ENCODE measurements at regions of chr14 and their contacts with region 1.

Region 1: DNA sequence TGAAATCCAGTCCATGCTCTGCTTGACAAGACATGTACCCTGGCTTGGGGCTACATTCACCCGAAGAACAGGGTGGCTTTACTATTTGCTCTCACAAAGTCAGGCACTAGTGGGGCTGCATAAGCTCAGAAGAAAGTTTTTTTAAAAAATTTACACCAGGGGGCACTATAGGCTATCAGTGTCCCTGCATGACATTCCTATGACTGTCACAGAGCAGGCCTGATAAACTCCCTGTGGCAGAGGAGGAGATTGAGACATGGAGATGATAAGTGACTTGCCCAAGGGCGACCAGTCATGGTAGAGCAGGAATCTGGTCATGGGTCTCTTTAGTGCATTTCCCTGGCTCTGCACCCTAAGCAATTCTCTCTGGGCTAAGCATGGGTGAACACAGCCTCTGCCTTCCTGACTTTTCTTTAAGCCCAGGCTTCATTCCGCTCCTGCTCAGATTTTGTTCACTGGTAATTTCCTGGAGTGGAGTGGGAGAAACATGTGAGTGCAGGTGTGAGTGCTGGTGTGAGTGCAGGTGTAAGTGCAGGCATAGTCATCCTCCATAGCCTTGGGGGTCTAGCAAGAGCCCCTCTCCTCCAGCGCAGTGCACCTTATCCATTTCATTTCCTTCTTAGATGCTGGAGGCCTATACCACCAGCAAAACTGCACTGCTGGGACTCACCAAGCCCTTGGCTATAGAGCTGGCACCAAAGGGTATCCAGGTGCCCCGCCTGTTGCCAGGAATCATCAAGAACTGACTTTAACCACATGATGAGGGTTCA is 91.6 kb downstream of the DHRS2 start:
- DNase-seq: no peak
- H3K4me3 Mint-ChIP-seq: no peak overlapping the region
- H3K27ac Mint-ChIP-seq: no peak overlapping the region
- H3K4me1 Mint-ChIP-seq: no peaks in the 10 kb centered on the region
- H3K27me3 Mint-ChIP-seq: no peaks in the 10 kb centered on the region

Region 2: DNA sequence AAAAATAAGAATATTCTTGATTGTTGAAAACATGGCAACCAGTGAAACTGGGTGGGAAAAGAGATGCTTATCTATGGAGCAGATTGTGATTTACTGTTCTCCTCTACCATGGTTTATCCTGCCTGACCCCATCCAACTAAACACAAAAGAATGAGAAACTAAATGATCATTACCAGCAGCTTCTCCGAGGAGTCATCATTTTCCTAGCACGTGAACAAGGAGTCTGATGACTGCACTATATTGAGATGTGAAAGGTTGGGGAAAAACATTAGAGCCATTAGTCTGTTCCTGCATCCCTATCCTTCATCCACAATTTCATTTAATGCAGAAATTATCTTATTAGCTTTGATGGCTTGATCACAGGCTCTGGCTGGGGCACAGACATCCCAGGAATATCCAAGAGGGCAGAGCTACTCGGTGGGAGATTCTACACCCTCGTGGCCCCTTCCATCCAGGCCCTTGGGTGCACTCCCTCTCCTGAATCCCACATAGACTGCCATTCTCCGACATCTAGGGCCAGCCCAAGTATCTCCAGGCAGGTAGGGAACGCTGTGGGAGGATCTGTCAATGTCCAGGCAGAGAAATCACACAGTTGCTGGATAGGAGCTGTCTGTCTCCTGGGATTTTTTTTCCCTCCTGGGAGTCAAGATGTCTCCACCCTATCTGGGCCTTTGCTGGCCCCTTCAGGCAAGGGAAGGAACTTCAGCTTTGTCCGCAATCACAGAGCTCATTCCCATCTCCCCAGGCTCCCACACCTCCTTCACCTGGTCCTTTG is 182.5 kb after region 1 on chr14:
- intact Hi-C with region 1: loop called (anchors 1 kb)
- DNase-seq: no peak
- H3K4me3 Mint-ChIP-seq: no peak overlapping the region
- H3K27ac Mint-ChIP-seq: no peak overlapping the region
- H3K4me1 Mint-ChIP-seq: peaks cover 7% of the 10 kb centered on the region
- H3K27me3 Mint-ChIP-seq: no peaks in the 10 kb centered on the region

Region 3: GRCh38 chr14:23929822-23930294 is 202.1 kb after region 1 on chr14:
- intact Hi-C with region 1: loop called (anchors 1 kb)
- DNase-seq: peak; percentile 63
- H3K4me3 Mint-ChIP-seq: no peak overlapping the region
- H3K27ac Mint-ChIP-seq: no peak overlapping the region
- H3K4me1 Mint-ChIP-seq: no peaks in the 10 kb centered on the region
- H3K27me3 Mint-ChIP-seq: peaks cover 7% of the 10 kb centered on the region

Measured in activated T-helper 2 cell treated with anti-CD3 and anti-CD28 coated beads, Interferon-gamma antibody, Interleukin-2, Interleukin-4, amounts not matched to agents 10 μg/mL and 5 μg/mL and 100 μg/mL, durations not matched to agents 14 hours and 24 hours and 36 hours (primary cell).